Activated naive CD4-positive, alpha-beta T cell treated with anti-CD3 and anti-CD28 coated beads for 36 hours (primary cell): ENCODE measurements at regions of chr1 and their contacts with region 1.

Region 1: GRCh38 chr1:201709564-201710295 is 119.2 kb upstream of the IPO9 start:
- DNase-seq: peak; percentile 70
- H3K4me3 Mint-ChIP-seq: no peak overlapping the region
- H3K27ac Mint-ChIP-seq: no peak overlapping the region
- H3K4me1 Mint-ChIP-seq: no peaks in the 10 kb centered on the region
- H3K27me3 Mint-ChIP-seq: no peaks in the 10 kb centered on the region

Region 2: GRCh38 chr1:200992382-200993048 is 717.2 kb before region 1 on chr1:
- CTCF ChIA-PET with region 1: no interaction called
- intact Hi-C with region 1: no loop called
- DNase-seq: no peak
- H3K4me3 Mint-ChIP-seq: no peak overlapping the region
- H3K27ac Mint-ChIP-seq: no peak overlapping the region
- H3K4me1 Mint-ChIP-seq: no peaks in the 10 kb centered on the region
- H3K27me3 Mint-ChIP-seq: no peaks in the 10 kb centered on the region

Region 3: GRCh38 chr1:201385299-201385891 is 324.3 kb before region 1 on chr1:
- CTCF ChIA-PET with region 1: no interaction called
- intact Hi-C with region 1: no loop called
- DNase-seq: peak; percentile 61
- H3K4me3 Mint-ChIP-seq: no peak overlapping the region
- H3K27ac Mint-ChIP-seq: no peak overlapping the region
- H3K4me1 Mint-ChIP-seq: no peaks in the 10 kb centered on the region
- H3K27me3 Mint-ChIP-seq: peaks cover 7% of the 10 kb centered on the region

Region 4: GRCh38 chr1:201670555-201670954 is 39.2 kb before region 1 on chr1:
- CTCF ChIA-PET with region 1: interaction called, 12 read pairs
- intact Hi-C with region 1: no loop called
- DNase-seq: no peak
- H3K4me3 Mint-ChIP-seq: no peak overlapping the region
- H3K27ac Mint-ChIP-seq: no peak overlapping the region
- H3K4me1 Mint-ChIP-seq: peaks cover 2% of the 10 kb centered on the region
- H3K27me3 Mint-ChIP-seq: peaks cover 2% of the 10 kb centered on the region

Region 5: GRCh38 chr1:201726700-201727099 is 17.0 kb after region 1 on chr1:
- CTCF ChIA-PET with region 1: interaction called, 10 read pairs
- intact Hi-C with region 1: no loop called
- DNase-seq: no peak
- H3K4me3 Mint-ChIP-seq: no peak overlapping the region
- H3K27ac Mint-ChIP-seq: no peak overlapping the region
- H3K4me1 Mint-ChIP-seq: no peaks in the 10 kb centered on the region
- H3K27me3 Mint-ChIP-seq: peaks cover 3% of the 10 kb centered on the region

Region 6: DNA sequence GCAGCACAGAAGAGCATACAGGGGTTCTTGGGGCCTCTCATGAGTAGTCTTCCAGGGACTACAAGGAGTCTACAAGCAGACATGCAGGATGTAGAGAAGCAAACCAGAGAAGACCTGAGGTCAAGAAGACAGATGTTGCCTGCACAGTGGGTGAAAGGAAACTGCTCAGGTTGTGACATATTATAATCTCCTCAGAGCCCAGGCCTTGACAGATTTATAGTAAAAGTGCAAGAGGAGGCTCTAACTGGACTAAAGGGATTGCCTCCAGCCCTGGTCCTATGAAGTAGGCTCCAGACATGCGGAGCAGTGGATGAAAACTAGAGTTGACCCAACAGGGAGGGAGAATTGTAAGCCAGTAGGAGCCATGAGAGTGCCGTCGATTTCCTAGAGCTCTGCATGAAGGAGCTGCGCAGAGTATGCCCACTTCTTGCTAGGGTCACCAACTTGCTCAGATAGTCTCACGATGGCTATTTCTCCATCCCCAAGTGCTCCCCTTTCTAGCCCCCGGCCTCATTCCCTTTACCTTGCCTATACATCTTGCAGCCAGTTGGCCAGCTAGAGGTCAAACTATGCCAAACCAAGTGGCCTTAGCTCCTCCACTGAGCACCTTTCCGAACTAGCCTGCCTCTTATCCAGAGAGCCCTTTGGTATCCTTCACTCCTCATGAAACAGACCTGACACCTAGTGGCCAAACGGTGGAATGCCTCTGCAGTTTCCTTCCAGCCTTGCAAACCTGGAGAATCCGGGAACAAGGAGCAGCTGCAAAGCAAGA is 83.0 kb after region 1 on chr1:
- CTCF ChIA-PET with region 1: interaction called, 266 read pairs
- intact Hi-C with region 1: loop called (anchors 1 kb)
- DNase-seq: peak; percentile 74
- H3K4me3 Mint-ChIP-seq: no peak overlapping the region
- H3K27ac Mint-ChIP-seq: no peak overlapping the region
- H3K4me1 Mint-ChIP-seq: no peaks in the 10 kb centered on the region
- H3K27me3 Mint-ChIP-seq: no peaks in the 10 kb centered on the region

Region 7: DNA sequence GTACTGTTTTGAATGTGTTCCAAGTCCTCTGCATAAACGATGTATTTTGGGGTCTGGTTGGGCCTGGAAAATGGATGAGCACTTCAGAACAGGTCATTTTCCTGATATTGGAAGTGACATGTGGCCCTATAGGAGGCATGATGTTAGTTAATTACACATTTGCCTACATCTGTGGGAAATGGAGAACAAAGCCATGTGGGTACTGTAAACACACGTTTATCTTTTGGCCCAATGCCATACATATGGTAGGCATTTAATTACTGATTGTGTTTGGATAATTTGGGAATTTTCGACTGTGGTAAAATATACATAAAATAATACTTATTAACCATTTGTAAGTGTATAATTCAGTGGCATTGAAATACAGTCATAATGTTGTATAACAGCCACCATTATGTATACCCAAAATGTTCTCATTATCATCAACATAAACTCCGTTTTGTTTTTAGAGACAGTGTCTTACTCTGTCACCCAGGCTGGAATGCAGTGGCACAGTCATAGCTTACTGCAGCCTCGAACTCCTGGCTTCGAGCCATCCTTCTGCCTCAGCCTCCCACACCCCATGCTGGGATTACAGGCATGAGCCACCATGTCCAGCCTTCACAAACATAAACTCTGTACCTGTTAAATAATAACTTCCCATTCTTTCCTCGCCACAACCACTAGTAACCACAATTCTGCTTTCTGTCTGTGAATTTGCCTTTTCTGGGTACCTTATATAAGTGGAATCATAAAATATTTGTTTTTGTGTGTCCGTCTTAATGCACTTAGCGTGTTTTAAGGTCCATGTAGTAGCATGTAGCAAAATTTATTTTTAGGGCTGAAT is 260.8 kb after region 1 on chr1:
- CTCF ChIA-PET with region 1: interaction called, 3 read pairs
- intact Hi-C with region 1: loop called (anchors 2 kb)
- DNase-seq: no peak
- H3K4me3 Mint-ChIP-seq: no peak overlapping the region
- H3K27ac Mint-ChIP-seq: no peak overlapping the region
- H3K4me1 Mint-ChIP-seq: no peaks in the 10 kb centered on the region
- H3K27me3 Mint-ChIP-seq: no peaks in the 10 kb centered on the region